Activated T-helper 2 cell treated with anti-CD3 and anti-CD28 coated beads, Interferon-gamma antibody, Interleukin-2, Interleukin-4, amounts not matched to agents 10 μg/mL and 5 μg/mL and 100 μg/mL, durations not matched to agents 14 hours and 24 hours and 36 hours (primary cell): ENCODE measurements at regions of chr3 and their contacts with region 1.

Region 1: GRCh38 chr3:183224180-183224970 is 28.7 kb upstream of the B3GNT5 start:
- DNase-seq: peak; percentile 52
- H3K4me3 Mint-ChIP-seq: peak overlapping the region; percentile 49
- H3K27ac Mint-ChIP-seq: peak overlapping the region; percentile 82
- H3K4me1 Mint-ChIP-seq: peaks cover 51% of the 10 kb centered on the region
- H3K27me3 Mint-ChIP-seq: no peaks in the 10 kb centered on the region

Region 2: DNA sequence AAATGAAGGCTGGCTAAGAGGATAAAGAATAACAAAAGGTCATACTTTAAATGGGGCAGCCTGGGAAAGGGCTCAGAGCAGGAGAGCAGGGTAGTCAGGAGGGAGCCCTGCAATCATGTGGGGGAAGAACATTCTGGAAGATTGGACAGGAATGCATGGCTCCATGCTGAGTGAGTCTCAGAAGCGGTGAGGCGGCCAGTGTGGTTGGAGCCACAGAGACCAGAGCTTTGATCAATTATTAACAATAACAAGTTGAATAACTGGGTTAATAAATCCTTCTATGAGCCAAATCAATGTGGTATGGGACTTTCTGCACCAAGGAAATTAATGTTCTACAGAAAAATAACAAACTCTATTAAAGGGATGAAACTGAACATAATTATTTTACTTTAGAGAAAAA is 186.2 kb before region 1 on chr3:
- intact Hi-C with region 1: no loop called
- DNase-seq: no peak
- H3K4me3 Mint-ChIP-seq: no peak overlapping the region
- H3K27ac Mint-ChIP-seq: no peak overlapping the region
- H3K4me1 Mint-ChIP-seq: no peaks in the 10 kb centered on the region
- H3K27me3 Mint-ChIP-seq: no peaks in the 10 kb centered on the region

Region 3: GRCh38 chr3:183188895-183189462 is 35.4 kb before region 1 on chr3:
- intact Hi-C with region 1: loop called (anchors 5 kb)
- DNase-seq: no peak
- H3K4me3 Mint-ChIP-seq: no peak overlapping the region
- H3K27ac Mint-ChIP-seq: no peak overlapping the region
- H3K4me1 Mint-ChIP-seq: peaks cover 16% of the 10 kb centered on the region
- H3K27me3 Mint-ChIP-seq: no peaks in the 10 kb centered on the region

Region 4: GRCh38 chr3:183210839-183211341 is 13.5 kb before region 1 on chr3:
- intact Hi-C with region 1: loop called (anchors 1 kb)
- DNase-seq: no peak
- H3K4me3 Mint-ChIP-seq: no peak overlapping the region
- H3K27ac Mint-ChIP-seq: peak overlapping the region; percentile 87
- H3K4me1 Mint-ChIP-seq: peaks cover 35% of the 10 kb centered on the region
- H3K27me3 Mint-ChIP-seq: no peaks in the 10 kb centered on the region

Region 5: DNA sequence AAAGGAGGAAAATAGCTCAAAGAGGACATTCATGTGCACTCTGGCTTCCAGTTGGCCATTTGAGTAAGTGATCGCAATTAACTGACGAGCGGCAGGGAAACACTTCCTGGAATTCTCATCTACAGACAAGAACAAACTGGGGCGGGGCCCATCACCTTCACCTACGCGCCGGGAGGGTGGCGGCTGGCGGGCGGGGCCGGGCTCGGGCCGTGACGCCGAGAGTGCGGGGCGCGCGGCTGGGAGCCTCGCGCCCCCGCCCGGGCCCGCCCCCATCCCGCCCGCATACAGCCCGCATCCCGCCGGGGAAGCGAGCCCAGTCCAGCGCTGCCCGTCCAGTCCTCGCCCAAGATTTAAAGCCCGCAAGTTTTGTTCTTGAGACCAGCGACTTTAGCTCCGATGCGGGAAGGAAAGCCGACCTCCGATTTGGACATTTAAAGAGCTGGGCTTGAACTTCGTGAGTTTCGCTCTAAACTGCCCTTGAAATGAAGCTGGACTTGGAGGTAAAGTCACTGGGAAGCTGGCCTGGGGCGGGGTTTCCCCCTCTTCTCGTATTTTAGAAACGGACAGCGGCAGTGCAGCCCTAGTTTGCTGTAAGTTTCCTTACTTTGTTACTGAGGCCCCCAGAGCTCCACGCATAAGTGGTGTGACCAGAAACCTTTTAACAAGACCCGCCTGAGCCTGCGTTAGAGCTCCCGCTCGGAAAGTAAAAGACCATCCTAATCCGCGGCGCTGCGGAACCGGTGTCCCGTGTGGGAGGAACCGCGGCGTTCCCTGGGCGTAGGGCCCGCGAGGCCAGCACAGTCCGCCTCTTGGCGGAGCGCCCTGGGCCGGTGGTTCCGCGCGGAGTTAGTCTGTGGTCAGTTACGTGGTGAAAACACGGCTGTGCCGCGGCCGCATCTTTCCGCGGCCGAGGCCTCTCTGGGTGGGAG is 28.9 kb after region 1 on chr3 and contains the start of gene B3GNT5:
- intact Hi-C with region 1: loop called (anchors 2 kb)
- DNase-seq: no peak
- H3K4me3 Mint-ChIP-seq: peak within 1 kb of the TSS; percentile 85
- H3K27ac Mint-ChIP-seq: peak within 1 kb of the TSS; percentile 76
- H3K4me1 Mint-ChIP-seq: peaks cover 23% of the 10 kb centered on the region
- H3K27me3 Mint-ChIP-seq: no peaks in the 10 kb centered on the region
- total RNA-seq, gene B3GNT5: 41.0 and 41.7 TPM in 2 replicates